Right ventricle myocardium superior (tissue), 1 donor: ENCODE measurements at regions of chr5 and their contacts with region 1.

Region 1: GRCh38 chr5:173868076-173868880 is 19.9 kb upstream of the CPEB4 start:
- DNase-seq: no peak
- ATAC-seq: no peak

Region 2: GRCh38 chr5:173764321-173765029 is 103.8 kb before region 1 on chr5:
- intact Hi-C with region 1: loop called (anchors 10 kb)
- DNase-seq: peak; percentile 82
- ATAC-seq: peak; percentile 18

Region 3: GRCh38 chr5:174472956-174473355 is 604.7 kb after region 1 on chr5:
- intact Hi-C with region 1: no loop called
- DNase-seq: no peak
- ATAC-seq: no peak